WTC11 (cell line): ENCODE measurements at regions of chr11 and their contacts with region 1.

Region 1: DNA sequence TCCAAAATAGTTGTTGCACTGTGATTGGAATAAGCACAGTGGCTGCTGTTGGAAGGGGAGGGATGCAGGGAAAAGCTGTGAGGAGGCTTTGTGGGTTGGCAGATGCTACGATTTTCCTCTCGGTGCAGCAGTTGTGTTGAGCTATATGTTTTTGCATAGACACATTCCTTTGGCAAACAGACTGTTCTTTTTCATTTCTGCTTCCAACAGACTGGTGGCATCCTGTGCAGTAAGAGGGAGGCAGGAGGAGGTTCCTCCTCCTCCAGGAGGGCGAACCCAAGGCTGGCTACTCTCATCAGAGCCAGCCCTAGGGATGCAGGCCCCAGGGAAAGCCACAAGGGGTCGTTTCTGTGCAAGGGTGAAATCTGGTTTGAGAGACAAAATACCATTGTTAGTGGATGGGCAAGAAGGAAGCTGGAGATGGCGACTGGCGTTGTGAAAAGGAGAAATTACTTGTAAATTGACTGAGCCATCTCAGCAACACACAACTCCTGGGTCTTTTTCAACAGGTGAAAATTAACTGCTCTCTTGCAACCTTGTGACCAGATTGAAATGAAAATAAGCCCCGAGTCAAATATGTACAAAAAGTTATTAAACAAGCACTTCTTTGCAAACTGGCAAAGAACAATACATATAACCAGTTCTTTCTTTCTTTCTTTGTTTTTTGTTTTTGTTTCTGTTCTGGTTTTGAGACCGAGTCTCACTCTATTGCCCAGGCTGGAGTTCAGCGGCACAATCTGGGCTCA is 26.5 kb upstream of the UBASH3B start:
- DNase-seq: peak; percentile 81
- ATAC-seq: peak; percentile 98
- H3K4me3 Mint-ChIP-seq: no peak overlapping the region
- H3K27ac Mint-ChIP-seq: no peak overlapping the region
- H3K4me1 Mint-ChIP-seq: no peaks in the 10 kb centered on the region; the same call in 1 of the 2 replicates
- H3K27me3 Mint-ChIP-seq: no peaks in the 10 kb centered on the region; the same call in 1 of the 2 replicates
- CTCF ChIP-seq: peak; percentile 63; the same call in 1 of the 2 replicates

Region 2: DNA sequence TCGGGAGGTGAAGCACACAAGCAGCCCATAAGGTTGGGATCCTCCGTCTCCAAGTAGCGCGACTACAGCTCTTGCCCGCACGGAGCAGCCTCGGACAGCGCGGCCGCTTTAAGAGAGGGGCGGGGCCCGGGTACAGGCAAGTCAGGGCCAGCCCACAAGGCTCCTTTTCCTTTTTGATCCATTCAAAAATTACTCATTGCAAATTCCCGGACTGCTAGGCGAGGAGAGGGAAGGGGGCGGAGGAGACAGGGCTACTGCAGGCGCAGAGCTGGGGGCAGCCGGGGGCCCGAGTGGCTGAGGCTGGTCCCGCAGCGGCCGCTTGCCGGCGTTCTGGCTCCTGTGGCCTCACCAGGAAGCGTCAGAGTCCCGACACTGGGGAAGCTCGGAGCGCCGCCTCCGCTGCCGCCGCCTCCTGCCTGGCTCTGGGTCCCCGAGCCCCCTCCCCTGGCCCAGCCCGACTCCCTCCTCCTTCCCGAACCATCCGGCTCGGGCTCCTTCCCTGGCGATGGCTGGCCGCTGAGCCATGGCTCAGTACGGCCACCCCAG is 26.6 kb after region 1 on chr11 and contains the start of gene UBASH3B:
- CTCF ChIA-PET with region 1: interaction called, 21 read pairs
- POLR2A ChIA-PET with region 1: no interaction called
- DNase-seq: peak; percentile 82
- ATAC-seq: peak; percentile 88
- H3K4me3 Mint-ChIP-seq: peak within 1 kb of the TSS; percentile 93
- H3K27ac Mint-ChIP-seq: 0 out of 2 replicates have a peak within 1 kb of the TSS, but pooled peaks have one; percentile 41
- H3K4me1 Mint-ChIP-seq: peaks cover 21% of the 10 kb centered on the region
- H3K27me3 Mint-ChIP-seq: peaks cover 22% of the 10 kb centered on the region
- CTCF ChIP-seq: no peak
- total RNA-seq, gene UBASH3B: 18.9 to 22.6 TPM (median 21.1 TPM) in 3 replicates